HEK293T (cell line): ENCODE measurements at regions of chr17 and their contacts with region 1.

Region 1: GRCh38 chr17:75289115-75289831 is at the start of gene SLC25A19:
- DNase-seq: peak; percentile 99

Region 2: GRCh38 chr17:75261336-75262111 is 27.7 kb before region 1 on chr17 and contains the starts of genes GGA3 and MRPS7:
- CTCF ChIA-PET with region 1: interaction called, 7 read pairs
- POLR2A ChIA-PET with region 1: interaction called, 23 read pairs
- DNase-seq: peak; percentile 96

Region 3: GRCh38 chr17:75277664-75278071 is 11.6 kb before region 1 on chr17:
- CTCF ChIA-PET with region 1: interaction called, 4 read pairs
- POLR2A ChIA-PET with region 1: interaction called, 82 read pairs
- DNase-seq: no peak

Region 4: GRCh38 chr17:75353176-75353575 is 63.9 kb after region 1 on chr17:
- CTCF ChIA-PET with region 1: no interaction called
- POLR2A ChIA-PET with region 1: no interaction called
- DNase-seq: no peak

Region 5: GRCh38 chr17:75405365-75406221 is 116.3 kb after region 1 on chr17 and contains the start of gene GRB2:
- CTCF ChIA-PET with region 1: interaction called, 3 read pairs
- POLR2A ChIA-PET with region 1: interaction called, 16 read pairs
- DNase-seq: peak; percentile 99